T-cell (primary cell): ENCODE measurements at regions of chr11 and their contacts with region 1.

Region 1: DNA sequence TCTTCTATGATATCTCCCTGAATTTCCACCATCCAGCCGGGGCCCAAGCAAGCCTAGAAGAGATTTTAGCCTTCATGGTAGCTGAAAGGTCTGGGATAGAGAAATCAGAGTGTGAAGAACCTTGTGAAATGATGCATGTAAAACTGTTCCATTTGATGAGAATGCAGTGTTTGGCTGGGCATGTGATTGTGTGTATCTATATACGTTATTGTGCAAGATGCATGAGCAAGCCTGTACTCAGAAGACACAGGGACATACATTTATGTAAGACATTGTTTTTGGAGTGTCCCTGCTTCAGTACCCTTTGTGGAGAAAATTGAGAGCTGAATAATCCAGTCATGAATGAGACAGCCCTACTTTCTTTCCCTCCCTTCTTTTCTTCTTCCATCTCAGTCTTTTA is 15.2 kb upstream of the OR52K2 start:
- DNase-seq: no peak
- ATAC-seq: no peak
- H3K4me3 ChIP-seq: no peak overlapping the region
- H3K4me3 Mint-ChIP-seq: no peak overlapping the region
- H3K27ac ChIP-seq: no peak overlapping the region
- H3K27ac Mint-ChIP-seq: no peak overlapping the region
- H3K4me1 ChIP-seq: no peaks in the 10 kb centered on the region
- H3K4me1 Mint-ChIP-seq: no peaks in the 10 kb centered on the region
- H3K27me3 ChIP-seq: peaks cover 0 to 9% of the 10 kb centered on the region in 2 experiments
- H3K27me3 Mint-ChIP-seq: peaks cover 0 to 23% of the 10 kb centered on the region in 2 donors

Region 2: DNA sequence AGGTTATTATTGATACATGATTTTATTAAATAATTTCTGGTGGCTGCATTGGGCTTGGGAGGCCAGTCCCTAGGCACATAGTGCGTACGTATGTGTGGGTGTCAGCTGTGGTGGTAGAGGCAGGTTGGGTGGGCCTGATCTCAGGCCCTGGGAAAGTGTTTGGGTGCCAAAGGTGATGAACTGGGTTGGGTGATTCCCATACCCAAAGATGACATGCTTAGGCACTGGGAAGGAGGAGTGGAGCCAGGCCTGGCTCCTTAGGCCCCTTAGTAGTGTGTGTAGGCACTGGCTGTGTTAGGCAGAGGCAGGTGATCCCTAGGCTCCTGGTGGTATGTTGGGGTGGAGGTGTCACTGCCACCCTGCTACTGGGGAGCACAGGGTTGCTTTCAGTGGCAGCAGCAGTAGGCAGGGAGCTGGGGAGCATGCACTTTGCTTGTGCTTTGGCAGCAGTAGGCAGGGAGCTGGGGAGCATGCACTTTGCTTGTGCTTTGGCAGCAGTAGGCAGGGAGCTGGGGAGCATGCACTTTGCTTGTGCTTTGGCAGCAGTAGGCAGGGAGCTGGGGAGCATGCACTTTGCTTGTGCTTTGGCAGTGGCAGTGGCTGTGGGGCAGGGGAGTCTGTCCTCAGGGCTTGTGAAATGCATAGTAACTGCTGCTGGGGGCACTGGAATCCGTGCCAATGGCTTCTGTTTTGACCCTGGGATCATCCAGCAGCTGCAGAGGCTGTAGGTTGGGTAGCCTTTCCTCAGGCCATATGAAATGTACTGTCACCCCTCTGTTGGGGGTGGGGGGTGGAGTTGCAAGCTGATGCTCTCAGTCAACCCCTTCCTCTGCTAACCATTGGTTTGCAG is 254.8 kb before region 1 on chr11:
- CTCF ChIA-PET with region 1: interaction called in 1 of 2 experiments, 11 read pairs
- POLR2A ChIA-PET with region 1: no interaction called
- DNase-seq: no peak
- ATAC-seq: no peak
- H3K4me3 ChIP-seq: no peak overlapping the region
- H3K4me3 Mint-ChIP-seq: no peak overlapping the region
- H3K27ac ChIP-seq: no peak overlapping the region
- H3K27ac Mint-ChIP-seq: no peak overlapping the region
- H3K4me1 ChIP-seq: no peaks in the 10 kb centered on the region
- H3K4me1 Mint-ChIP-seq: no peaks in the 10 kb centered on the region
- H3K27me3 ChIP-seq: peaks cover 0 to 6% of the 10 kb centered on the region in 2 experiments
- H3K27me3 Mint-ChIP-seq: peaks cover 5 to 22% of the 10 kb centered on the region in 2 donors